Panc1 (cell line): ENCODE measurements at regions of chr3 and their contacts with region 1.

Region 1: DNA sequence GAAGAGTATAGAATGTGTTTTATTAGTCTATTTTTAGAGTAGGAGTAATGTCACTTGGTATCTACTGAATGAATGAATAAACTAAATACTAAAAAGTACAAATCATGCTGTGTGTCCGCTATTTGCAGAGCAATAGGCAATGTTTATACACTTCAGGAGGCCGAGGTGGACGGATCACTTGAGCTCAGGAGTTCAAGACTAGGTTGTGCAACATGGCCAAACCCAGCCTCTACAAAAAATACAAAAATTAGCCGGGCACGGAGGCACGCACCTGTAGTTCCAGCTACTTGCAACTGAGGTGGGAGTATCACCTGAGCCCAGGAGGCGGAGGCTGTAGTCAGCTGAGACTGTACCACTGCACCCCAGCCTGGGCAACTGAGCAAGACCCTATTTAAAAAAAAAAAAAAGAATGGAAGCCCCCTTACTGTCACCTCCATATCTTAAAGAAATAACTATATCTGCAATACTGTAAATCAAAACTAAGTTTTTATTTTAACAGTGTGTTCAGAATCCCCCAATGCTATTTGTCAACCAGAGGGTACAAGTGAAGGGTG is 98.4 kb downstream of the DHX30 start:
- DNase-seq: no peak
- ATAC-seq: no peak
- H3K4me3 ChIP-seq: no peak overlapping the region
- H3K27ac ChIP-seq: no peak overlapping the region
- H3K4me1 ChIP-seq: no peaks in the 10 kb centered on the region
- H3K27me3 ChIP-seq: no peaks in the 10 kb centered on the region
- CTCF ChIP-seq: no peak

Region 2: GRCh38 chr3:47186285-47186684 is 715.1 kb before region 1 on chr3:
- CTCF ChIA-PET with region 1: no interaction called
- POLR2A ChIA-PET with region 1: no interaction called
- in situ Hi-C with region 1: no loop called
- intact Hi-C with region 1: no loop called
- DNase-seq: no peak
- ATAC-seq: no peak
- H3K4me3 ChIP-seq: no peak overlapping the region
- H3K27ac ChIP-seq: no peak overlapping the region
- H3K4me1 ChIP-seq: no peaks in the 10 kb centered on the region
- H3K27me3 ChIP-seq: no peaks in the 10 kb centered on the region
- CTCF ChIP-seq: no peak

Region 3: GRCh38 chr3:47634996-47635395 is 266.4 kb before region 1 on chr3:
- CTCF ChIA-PET with region 1: no interaction called
- POLR2A ChIA-PET with region 1: no interaction called
- in situ Hi-C with region 1: no loop called
- intact Hi-C with region 1: no loop called
- DNase-seq: no peak
- ATAC-seq: no peak
- H3K4me3 ChIP-seq: no peak overlapping the region
- H3K27ac ChIP-seq: no peak overlapping the region
- H3K4me1 ChIP-seq: no peaks in the 10 kb centered on the region
- H3K27me3 ChIP-seq: no peaks in the 10 kb centered on the region
- CTCF ChIP-seq: no peak

Region 4: GRCh38 chr3:47979070-47979469 is 77.7 kb after region 1 on chr3:
- CTCF ChIA-PET with region 1: interaction called, 17 read pairs
- POLR2A ChIA-PET with region 1: no interaction called
- in situ Hi-C with region 1: no loop called
- intact Hi-C with region 1: no loop called
- DNase-seq: no peak
- ATAC-seq: no peak
- H3K4me3 ChIP-seq: no peak overlapping the region
- H3K27ac ChIP-seq: no peak overlapping the region
- H3K4me1 ChIP-seq: no peaks in the 10 kb centered on the region
- H3K27me3 ChIP-seq: no peaks in the 10 kb centered on the region
- CTCF ChIP-seq: no peak